ENCODE measurements at regions of chr4 and their contacts with region 1.

Region 1: DNA sequence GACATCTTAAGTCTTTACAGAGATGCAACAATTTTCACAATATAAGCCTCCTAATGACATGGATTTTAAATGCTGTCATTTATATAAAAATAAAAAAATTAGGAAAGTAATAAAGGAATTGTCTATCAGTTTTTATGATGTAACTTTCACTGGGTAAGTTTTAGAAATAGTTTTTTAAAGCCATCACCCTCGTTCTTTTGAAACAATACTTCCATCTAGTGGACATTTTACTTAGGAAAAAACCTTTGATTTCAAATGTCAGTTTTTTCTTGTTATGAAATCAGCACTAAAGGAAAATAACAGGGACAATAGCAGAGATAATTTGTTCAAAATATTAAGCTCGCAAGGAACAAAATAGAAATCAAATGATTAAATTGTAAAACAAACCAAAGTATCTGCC is 24.3 kb upstream of the NDNF start:
- DNase-seq: no peak
- ATAC-seq: no peak
- H3K4me3 Mint-ChIP-seq: no peak overlapping the region
- H3K27ac Mint-ChIP-seq: no peak overlapping the region
- H3K4me1 Mint-ChIP-seq: no peaks in the 10 kb centered on the region
- H3K27me3 Mint-ChIP-seq: no peaks in the 10 kb centered on the region

Region 2: DNA sequence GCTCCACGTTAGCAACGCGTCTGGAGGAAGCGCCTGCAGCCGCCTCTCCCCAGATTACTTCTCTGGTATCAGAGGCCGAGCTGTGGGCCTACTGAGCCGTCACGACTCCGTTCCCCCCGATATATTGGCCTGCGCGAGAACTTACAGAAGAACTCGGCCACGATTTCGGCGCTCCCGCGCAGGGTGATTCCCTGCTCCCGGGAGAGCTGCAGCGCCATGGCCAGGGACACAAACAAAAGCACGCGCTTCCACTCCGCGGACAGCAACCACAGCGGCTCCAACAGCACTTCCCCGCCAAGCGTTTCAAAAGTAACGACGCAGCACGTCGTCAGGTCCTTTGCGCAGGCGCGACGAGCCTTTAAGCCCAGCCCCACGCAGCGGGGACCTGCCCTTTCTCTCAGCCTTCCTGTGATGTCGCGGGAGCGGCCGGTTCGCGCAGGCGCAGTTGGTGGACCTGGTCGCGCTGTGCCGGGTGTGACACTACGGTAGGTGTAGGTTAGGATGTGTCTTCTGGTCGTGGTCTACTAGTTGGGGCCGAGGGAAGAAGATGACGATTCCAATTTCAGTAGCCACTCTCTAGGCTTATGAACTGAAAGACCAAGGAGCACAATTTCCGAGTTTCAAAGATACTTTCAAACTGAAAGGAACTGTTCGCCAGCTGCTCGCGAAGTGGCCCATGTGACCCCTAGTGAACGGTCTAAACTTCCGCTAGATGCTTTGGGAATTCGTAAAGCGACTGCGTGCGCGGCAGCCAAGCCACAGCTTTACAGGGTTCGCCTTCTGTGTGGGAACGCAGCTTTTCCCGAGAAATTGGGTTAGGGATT is 1029.9 kb before region 1 on chr4 and contains the start of gene MAD2L1:
- CTCF ChIA-PET with region 1: no interaction called
- POLR2A ChIA-PET with region 1: no interaction called
- intact Hi-C with region 1: loop called (anchors 1 to 2 kb)
- DNase-seq: peak; percentile 99
- ATAC-seq: peak; percentile 94
- H3K4me3 Mint-ChIP-seq: peak within 1 kb of the TSS; percentile 86
- H3K27ac Mint-ChIP-seq: peak within 1 kb of the TSS; percentile 97
- H3K4me1 Mint-ChIP-seq: peaks cover 58% of the 10 kb centered on the region
- H3K27me3 Mint-ChIP-seq: no peaks in the 10 kb centered on the region
- total RNA-seq, gene MAD2L1: 55.8 to 104 TPM

Measured in activated CD4-positive, alpha-beta T cell treated with anti-CD3 and anti-CD28 coated beads for 36 hours (primary cell).